Activated T-helper 1 cell treated with anti-CD3 and anti-CD28 coated beads, Interleukin-12 subunit alpha, Interleukin-12 subunit beta, Interleukin-2, Interleukin-4 antibody, amounts not matched to agents 30 ng/mL and 10 ng/mL and 1 ng/mL, durations not matched to agents 14 hours and 24 hours and 36 hours (primary cell): ENCODE measurements at regions of chr17 and their contacts with region 1.

Region 1: DNA sequence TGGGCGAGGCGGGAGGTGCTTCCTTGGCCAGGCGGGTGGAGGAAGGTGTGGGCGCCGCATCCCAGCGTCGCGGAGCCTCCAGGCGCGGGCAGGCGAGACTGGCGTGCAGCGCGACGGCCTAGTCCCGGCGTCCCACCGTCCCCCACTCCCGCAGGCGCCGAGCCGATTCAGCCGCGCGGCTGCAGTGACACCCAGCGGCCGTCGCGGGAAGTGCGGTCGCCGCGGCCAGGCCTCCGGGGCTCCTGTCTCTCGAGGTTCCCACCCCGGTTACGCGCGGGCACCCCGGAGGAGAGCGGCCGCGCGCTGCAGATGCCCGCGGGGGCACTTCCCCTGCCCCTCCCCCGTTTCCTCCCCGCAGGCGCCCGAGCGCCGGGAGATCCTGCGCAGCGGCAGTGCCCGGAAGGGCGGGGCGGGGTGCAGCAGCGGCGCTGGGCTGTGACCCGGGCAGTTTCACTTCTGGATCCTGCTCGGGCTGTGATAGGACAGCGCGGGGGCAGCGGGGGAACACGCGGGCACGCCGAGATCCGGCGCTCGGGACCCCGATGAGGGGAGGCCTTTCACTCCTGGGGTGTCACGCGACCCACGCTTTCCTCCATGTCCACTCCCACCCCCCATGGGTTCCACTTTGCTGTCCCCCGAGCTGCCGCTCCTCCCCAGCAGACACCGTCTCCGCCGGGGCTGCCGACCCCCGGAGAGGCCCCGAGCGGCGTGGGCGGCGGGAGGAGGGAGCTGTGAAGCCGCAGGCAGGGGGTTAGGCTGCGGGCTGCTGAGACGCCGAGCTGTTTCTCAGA is 16.6 kb downstream of the GRB7 start:
- DNase-seq: peak; percentile 97
- H3K4me3 Mint-ChIP-seq: peak overlapping the region; percentile 81
- H3K27ac Mint-ChIP-seq: peak overlapping the region; percentile 53
- H3K4me1 Mint-ChIP-seq: peaks cover 60% of the 10 kb centered on the region
- H3K27me3 Mint-ChIP-seq: no peaks in the 10 kb centered on the region

Region 2: DNA sequence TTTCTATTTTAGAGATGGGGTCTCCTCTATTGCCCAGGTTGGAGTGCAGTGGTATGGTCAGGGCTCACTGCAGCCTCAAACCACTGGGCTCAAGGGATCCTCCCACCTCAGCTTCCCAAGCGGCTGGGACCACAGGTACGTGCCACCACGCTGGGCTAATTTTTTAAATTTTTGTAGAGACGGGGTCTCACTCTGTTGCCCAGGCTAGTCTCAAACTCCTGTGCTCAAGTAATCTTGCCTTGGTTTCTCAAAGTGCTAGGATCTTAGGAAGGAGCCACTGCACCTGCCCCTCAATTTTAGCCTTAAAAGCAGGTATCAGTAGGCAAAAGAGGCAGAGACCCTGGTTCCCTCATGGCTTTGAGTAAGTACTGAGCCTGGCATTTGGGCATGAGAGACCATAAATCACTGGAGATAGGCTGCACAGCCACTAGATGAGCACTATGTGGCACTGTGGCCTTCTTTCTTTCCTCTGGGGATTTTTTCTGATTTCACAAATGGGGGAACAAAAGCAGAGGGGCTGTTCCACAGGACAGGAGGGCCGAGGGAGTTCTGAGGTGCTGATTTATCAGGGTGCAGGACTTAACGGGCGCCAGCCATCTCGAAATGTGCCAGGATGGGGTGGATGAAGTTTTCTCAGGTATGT is 685.1 kb before region 1 on chr17:
- intact Hi-C with region 1: no loop called
- DNase-seq: no peak
- H3K4me3 Mint-ChIP-seq: no peak overlapping the region
- H3K27ac Mint-ChIP-seq: no peak overlapping the region
- H3K4me1 Mint-ChIP-seq: peaks cover 12% of the 10 kb centered on the region
- H3K27me3 Mint-ChIP-seq: peaks cover 1% of the 10 kb centered on the region

Region 3: DNA sequence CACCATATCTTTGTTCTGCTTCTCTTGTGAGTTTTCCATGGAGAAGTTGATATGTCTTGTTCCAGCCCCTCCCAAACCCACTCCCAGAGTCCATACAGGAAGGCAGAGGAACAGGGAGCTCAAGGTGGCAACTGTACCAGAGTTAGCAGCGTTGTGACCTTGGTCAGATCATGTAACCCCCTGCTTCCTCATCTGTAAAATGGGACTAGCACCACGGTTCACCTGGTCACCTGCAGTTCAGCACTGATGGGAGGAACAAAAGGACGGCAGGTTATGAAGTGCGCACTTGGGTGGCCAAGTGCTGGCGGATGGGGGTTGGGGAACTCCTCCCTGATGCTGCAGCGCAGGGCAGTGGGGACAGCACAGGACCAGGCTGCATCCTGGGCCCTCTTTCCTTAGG is 138.9 kb before region 1 on chr17:
- intact Hi-C with region 1: no loop called
- DNase-seq: no peak
- H3K4me3 Mint-ChIP-seq: no peak overlapping the region
- H3K27ac Mint-ChIP-seq: no peak overlapping the region
- H3K4me1 Mint-ChIP-seq: no peaks in the 10 kb centered on the region
- H3K27me3 Mint-ChIP-seq: peaks cover 67% of the 10 kb centered on the region

Region 4: GRCh38 chr17:39636927-39637736 is 117.2 kb before region 1 on chr17 and contains the start of gene STARD3:
- intact Hi-C with region 1: loop called (anchors 1 kb)
- DNase-seq: peak; percentile 88
- H3K4me3 Mint-ChIP-seq: peak within 1 kb of the TSS; percentile 94
- H3K27ac Mint-ChIP-seq: peak within 1 kb of the TSS; percentile 85
- H3K4me1 Mint-ChIP-seq: peaks cover 34% of the 10 kb centered on the region
- H3K27me3 Mint-ChIP-seq: peaks cover 2% of the 10 kb centered on the region
- total RNA-seq, gene STARD3: 54.7 and 65.3 TPM in 2 replicates

Region 5: DNA sequence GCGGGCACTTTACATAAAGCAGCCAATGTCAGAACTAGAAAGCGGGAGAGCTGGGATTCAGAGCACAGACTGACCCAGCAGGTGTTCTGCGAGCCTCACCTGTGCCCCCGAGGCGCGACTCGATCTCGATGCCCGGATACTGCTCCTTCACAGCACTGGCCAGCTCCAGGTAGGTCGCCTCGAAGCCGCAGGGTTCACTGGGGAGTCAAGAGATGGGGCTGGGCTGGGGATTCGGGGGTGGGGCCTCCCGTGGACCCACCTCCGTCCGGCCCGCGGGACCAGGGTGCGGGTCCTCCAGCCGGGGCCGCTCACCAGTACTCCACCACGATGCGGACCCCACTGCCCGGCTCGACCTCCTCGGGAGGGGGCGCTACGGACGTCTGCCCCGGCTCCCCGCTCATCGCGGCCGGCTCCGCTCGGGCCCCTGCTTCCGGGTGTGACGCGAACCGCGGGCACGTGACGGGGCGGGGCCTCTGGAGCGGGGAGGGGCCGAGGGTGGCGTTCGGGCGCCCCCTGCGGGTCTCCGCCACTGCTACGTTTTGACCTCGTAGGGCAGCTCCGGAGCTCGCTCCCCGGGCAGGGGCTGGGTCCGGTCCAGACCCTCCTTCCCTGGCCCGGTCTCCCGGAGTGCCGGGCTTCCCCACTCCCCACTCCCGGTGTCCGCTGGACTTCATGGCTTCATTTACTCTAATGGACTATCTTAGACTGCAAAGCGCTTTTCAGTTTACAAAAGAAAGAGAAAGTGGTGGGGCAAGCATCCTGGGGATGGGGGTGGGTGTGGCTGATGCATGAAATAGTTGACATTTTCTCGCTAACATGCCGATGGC is 24.0 kb before region 1 on chr17 and contains the start of gene MIEN1:
- intact Hi-C with region 1: loop called (anchors 1 kb)
- DNase-seq: peak; percentile 90
- H3K4me3 Mint-ChIP-seq: peak within 1 kb of the TSS; percentile 92
- H3K27ac Mint-ChIP-seq: peak within 1 kb of the TSS; percentile 85
- H3K4me1 Mint-ChIP-seq: peaks cover 11% of the 10 kb centered on the region
- H3K27me3 Mint-ChIP-seq: peaks cover 7% of the 10 kb centered on the region
- total RNA-seq, gene MIEN1: 33.3 and 37.1 TPM in 2 replicates

Region 6: GRCh38 chr17:39769974-39770587 is 15.7 kb after region 1 on chr17:
- intact Hi-C with region 1: loop called (anchors 1 kb)
- DNase-seq: peak; percentile 63
- H3K4me3 Mint-ChIP-seq: peak overlapping the region; percentile 38
- H3K27ac Mint-ChIP-seq: peak overlapping the region; percentile 56
- H3K4me1 Mint-ChIP-seq: peaks cover 93% of the 10 kb centered on the region
- H3K27me3 Mint-ChIP-seq: no peaks in the 10 kb centered on the region

Region 7: GRCh38 chr17:39813631-39814030 is 59.3 kb after region 1 on chr17:
- intact Hi-C with region 1: loop called (anchors 10 kb)
- DNase-seq: peak; percentile 41
- H3K4me3 Mint-ChIP-seq: peak overlapping the region; percentile 62
- H3K27ac Mint-ChIP-seq: peak overlapping the region; percentile 49
- H3K4me1 Mint-ChIP-seq: peaks cover 55% of the 10 kb centered on the region
- H3K27me3 Mint-ChIP-seq: peaks cover 3% of the 10 kb centered on the region